AG04450 (cell line): ENCODE measurements at regions of chr6 and their contacts with region 1.

Region 1: DNA sequence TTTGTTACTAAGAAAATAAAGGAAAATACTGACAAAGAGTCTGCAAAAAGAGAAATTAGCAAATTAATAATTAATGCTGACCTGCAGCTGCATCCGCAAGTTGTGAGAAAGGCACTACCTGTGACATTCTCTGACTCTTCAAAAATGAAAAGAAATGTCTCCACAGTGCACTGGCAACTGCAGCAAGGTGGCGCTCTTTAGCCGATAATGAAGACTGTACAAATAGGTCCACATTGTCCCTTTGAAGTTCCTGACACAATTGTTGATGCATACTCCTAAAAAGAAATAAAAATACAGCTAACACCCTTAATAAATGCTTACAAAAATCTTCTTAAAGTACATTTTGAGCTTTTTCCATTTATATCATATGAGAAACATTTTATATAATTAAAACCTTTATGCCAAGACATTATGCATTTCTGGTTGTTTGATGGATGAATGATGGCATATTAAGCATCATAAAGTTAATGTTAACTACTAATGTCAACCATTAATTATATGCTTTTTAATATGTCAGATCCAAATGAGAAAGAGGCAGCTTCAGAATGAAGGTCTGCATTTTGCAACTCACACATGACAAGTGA is 96.5 kb downstream of the MMS22L start:
- DNase-seq: peak; percentile 38
- H3K4me3 ChIP-seq: no peak overlapping the region
- H3K27ac ChIP-seq: no peak overlapping the region
- H3K27me3 ChIP-seq: no peaks in the 10 kb centered on the region
- CTCF ChIP-seq: peak; percentile 95

Region 2: GRCh38 chr6:97053643-97054411 is 132.7 kb before region 1 on chr6:
- CTCF ChIA-PET with region 1: no interaction called
- POLR2A ChIA-PET with region 1: no interaction called
- DNase-seq: no peak
- H3K4me3 ChIP-seq: no peak overlapping the region
- H3K27ac ChIP-seq: no peak overlapping the region
- H3K27me3 ChIP-seq: peaks cover 5% of the 10 kb centered on the region
- CTCF ChIP-seq: peak; percentile 58

Region 3: GRCh38 chr6:97160280-97160679 is 26.2 kb before region 1 on chr6:
- CTCF ChIA-PET with region 1: interaction called, 14 read pairs
- POLR2A ChIA-PET with region 1: no interaction called
- DNase-seq: no peak
- H3K4me3 ChIP-seq: no peak overlapping the region
- H3K27ac ChIP-seq: no peak overlapping the region
- H3K27me3 ChIP-seq: no peaks in the 10 kb centered on the region
- CTCF ChIP-seq: no peak

Region 4: GRCh38 chr6:97203343-97203742 is 16.8 kb after region 1 on chr6:
- CTCF ChIA-PET with region 1: interaction called, 121 read pairs
- POLR2A ChIA-PET with region 1: interaction called, 4 read pairs
- DNase-seq: peak; percentile 65
- H3K4me3 ChIP-seq: no peak overlapping the region
- H3K27ac ChIP-seq: no peak overlapping the region
- H3K27me3 ChIP-seq: no peaks in the 10 kb centered on the region
- CTCF ChIP-seq: no peak

Region 5: GRCh38 chr6:97361286-97361685 is 174.8 kb after region 1 on chr6:
- CTCF ChIA-PET with region 1: interaction called, 19 read pairs
- POLR2A ChIA-PET with region 1: no interaction called
- DNase-seq: no peak
- H3K4me3 ChIP-seq: no peak overlapping the region
- H3K27ac ChIP-seq: no peak overlapping the region
- H3K27me3 ChIP-seq: no peaks in the 10 kb centered on the region
- CTCF ChIP-seq: no peak

Region 6: DNA sequence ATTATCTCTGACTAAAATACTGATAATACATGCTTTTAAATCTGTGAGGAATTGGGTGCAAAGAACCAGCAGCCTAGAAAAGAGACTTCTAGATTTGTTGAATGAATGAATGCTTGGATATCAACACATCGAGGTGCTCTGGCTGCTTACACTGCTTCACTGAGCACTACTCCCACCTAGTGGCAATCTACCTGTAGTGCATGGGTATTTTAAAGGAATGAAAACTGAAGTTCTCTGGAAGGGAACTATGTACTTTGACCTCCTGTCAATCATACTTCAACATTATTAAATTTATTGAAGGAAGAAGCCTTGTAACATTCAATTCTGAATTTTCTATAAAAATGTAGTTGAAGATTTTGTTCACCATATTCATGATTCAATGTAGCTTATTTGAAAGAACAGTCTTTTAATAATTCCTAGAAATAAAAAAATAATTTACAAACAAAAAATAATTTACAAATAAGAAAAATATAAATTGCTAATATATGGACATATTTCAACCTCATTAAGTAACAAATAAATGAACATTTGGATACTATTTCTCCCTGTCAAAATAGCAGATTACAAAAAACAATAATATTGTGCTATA is 207.7 kb after region 1 on chr6:
- CTCF ChIA-PET with region 1: interaction called, 247 read pairs
- POLR2A ChIA-PET with region 1: no interaction called
- DNase-seq: peak; percentile 15
- H3K4me3 ChIP-seq: no peak overlapping the region
- H3K27ac ChIP-seq: no peak overlapping the region
- H3K27me3 ChIP-seq: no peaks in the 10 kb centered on the region
- CTCF ChIP-seq: peak; percentile 96

Region 7: GRCh38 chr6:97437087-97437486 is 250.6 kb after region 1 on chr6:
- CTCF ChIA-PET with region 1: interaction called, 18 read pairs
- POLR2A ChIA-PET with region 1: no interaction called
- DNase-seq: no peak
- H3K4me3 ChIP-seq: no peak overlapping the region
- H3K27ac ChIP-seq: no peak overlapping the region
- H3K27me3 ChIP-seq: no peaks in the 10 kb centered on the region
- CTCF ChIP-seq: peak; percentile 95

Region 8: DNA sequence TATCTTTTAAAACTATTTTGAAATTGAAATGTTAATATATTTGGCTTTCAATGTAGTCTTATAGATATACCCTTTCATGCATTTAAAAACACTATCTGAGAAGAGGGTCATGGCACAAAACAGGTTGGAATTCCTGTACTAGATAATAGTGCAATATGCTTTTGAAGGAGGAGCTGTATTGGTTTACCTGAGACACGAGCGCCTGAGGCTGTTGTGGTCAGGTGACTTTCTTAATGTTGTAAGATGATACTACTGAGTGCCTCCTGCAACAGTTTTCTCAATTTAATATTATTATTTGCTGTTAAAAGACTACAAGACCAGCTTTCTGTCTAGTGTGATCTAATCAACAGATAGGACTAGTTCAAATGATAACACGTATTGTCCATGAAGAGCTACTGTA is 387.3 kb after region 1 on chr6:
- CTCF ChIA-PET with region 1: no interaction called
- POLR2A ChIA-PET with region 1: no interaction called
- DNase-seq: no peak
- H3K4me3 ChIP-seq: no peak overlapping the region
- H3K27ac ChIP-seq: no peak overlapping the region
- H3K27me3 ChIP-seq: no peaks in the 10 kb centered on the region
- CTCF ChIP-seq: no peak